Right ventricle myocardium inferior (tissue), 1 donor: ENCODE measurements at regions of chr5 and their contacts with region 1.

Region 1: DNA sequence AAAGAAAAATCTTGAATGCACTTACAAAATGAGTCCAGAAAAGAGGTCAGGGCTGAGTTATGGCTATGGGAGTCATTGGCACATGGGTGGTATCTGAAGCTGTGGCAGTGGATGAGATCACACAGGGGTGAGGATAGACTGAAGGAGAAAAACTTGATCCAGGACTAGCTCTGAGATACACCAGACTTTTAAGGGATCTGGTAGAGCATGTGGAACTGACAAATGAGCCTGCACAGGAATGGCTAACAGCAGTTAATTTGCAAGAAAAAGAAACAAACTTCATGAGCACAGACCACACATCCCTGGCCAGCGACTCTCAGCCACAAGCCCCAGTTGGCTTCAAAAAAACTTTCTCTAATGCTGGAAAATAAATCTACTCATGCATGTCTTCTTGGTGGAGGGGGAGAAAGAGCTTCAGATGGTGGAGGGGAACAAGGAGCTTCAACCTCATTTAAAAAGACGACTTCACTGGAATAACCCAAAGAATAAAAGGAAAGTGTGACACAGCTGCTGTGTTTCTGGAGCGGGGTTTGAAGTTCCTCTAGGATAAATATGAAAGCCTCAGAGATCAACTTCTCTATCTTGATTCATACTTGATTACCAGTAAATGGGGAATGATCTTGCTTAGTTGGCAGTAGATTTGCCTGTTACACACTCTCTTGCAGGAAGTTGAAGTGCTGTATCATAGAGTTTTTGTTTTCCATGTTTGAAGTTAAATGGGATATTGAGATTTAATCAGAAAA is 33.6 kb downstream of the TNFAIP8 start:
- DNase-seq: no peak
- ATAC-seq: no peak

Region 2: GRCh38 chr5:119336845-119337580 is 52.4 kb before region 1 on chr5:
- intact Hi-C with region 1: loop called (anchors 5 kb)
- DNase-seq: no peak
- ATAC-seq: no peak